CD8-positive, alpha-beta T cell (primary cell): ENCODE measurements at regions of chr18 and their contacts with region 1.

Region 1: DNA sequence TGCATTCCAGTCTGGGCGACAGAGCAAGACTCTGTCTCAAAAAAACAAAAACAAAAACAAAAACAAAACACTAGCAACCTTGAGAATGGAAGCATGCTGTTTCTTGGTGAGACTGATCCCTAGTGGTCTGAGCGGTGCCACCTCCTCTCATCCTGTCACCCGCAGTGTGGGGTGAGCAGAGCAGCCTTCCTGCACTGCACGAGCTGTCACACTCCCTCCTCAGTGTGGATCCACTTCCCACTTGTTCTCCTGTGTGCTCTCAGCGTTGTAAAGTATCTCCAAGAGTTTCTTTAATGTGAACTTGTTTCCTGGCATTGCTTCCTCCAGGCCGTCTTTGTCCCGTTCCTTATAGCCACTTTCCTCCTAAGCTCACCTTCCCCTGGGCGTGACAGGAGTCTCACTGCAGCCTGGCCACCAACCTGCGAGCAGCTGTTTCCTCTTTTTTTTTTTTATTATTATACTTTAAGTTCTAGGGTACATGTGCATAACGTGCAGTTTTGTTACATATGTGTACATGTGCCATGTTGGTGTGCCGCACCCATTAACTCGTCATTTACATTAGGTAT is 220.5 kb downstream of the FAM210A start:
- DNase-seq: peak in 1 of 9 experiments; percentile 28
- ATAC-seq: peak; percentile 62
- H3K4me3 ChIP-seq: no peak overlapping the region
- H3K4me3 Mint-ChIP-seq: peak overlapping the region; percentile 37
- H3K27ac ChIP-seq: no peak overlapping the region
- H3K27ac Mint-ChIP-seq: peak overlapping the region; percentile 64
- H3K4me1 ChIP-seq: peaks cover 18% of the 10 kb centered on the region
- H3K4me1 Mint-ChIP-seq: peaks cover 62% of the 10 kb centered on the region
- H3K27me3 ChIP-seq: no peaks in the 10 kb centered on the region
- H3K27me3 Mint-ChIP-seq: no peaks in the 10 kb centered on the region
- CTCF ChIP-seq: no peak

Region 2: GRCh38 chr18:12721495-12722275 is 784.2 kb before region 1 on chr18:
- CTCF ChIA-PET with region 1: no interaction called
- POLR2A ChIA-PET with region 1: no interaction called
- intact Hi-C with region 1: no loop called
- DNase-seq: no peak
- ATAC-seq: no peak
- H3K4me3 ChIP-seq: no peak overlapping the region
- H3K4me3 Mint-ChIP-seq: no peak overlapping the region
- H3K27ac ChIP-seq: no peak overlapping the region
- H3K27ac Mint-ChIP-seq: peak overlapping the region; percentile 35
- H3K4me1 ChIP-seq: no peaks in the 10 kb centered on the region
- H3K4me1 Mint-ChIP-seq: peaks cover 2% of the 10 kb centered on the region
- H3K27me3 ChIP-seq: no peaks in the 10 kb centered on the region
- H3K27me3 Mint-ChIP-seq: no peaks in the 10 kb centered on the region
- CTCF ChIP-seq: no peak

Region 3: DNA sequence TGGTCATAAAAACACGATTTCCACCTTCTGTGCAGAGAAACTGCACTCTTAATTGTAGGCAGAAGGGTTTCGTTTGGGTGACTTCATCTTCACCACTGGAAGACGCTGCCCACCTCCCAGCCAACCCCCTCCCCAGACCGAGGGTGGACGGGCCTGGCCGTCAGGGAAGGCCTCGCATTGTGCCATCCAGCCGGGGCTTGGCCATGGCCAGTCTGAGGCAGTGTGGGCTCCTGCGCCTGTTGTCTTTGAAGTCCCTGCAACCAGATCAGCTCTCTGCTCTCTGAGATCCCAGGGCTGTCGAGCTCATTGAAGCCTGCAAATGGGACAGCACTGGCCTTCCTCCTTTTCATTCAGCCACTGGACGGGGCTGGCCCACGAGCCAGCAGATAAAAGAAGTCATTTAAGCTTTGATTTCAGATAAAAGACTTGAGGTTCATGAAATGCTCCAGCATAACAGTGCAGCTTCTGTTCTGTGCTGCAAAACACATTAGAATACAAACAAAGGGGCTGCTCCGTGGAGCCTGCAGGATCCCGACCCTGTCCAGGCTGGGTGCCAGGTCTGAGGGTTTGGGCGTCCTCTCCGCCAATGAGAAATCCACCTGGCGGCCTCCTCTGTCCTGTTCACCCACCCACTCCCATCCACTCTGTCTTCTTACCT is 33.8 kb before region 1 on chr18:
- CTCF ChIA-PET with region 1: interaction called, 3 read pairs
- POLR2A ChIA-PET with region 1: no interaction called
- intact Hi-C with region 1: loop called in 1 of 2 experiments (anchors 5 kb)
- DNase-seq: no peak
- ATAC-seq: no peak
- H3K4me3 ChIP-seq: no peak overlapping the region
- H3K4me3 Mint-ChIP-seq: peak overlapping the region; percentile 11
- H3K27ac ChIP-seq: no peak overlapping the region
- H3K27ac Mint-ChIP-seq: peak overlapping the region; percentile 68
- H3K4me1 ChIP-seq: peaks cover 9% of the 10 kb centered on the region
- H3K4me1 Mint-ChIP-seq: peaks cover 58% of the 10 kb centered on the region
- H3K27me3 ChIP-seq: no peaks in the 10 kb centered on the region
- H3K27me3 Mint-ChIP-seq: no peaks in the 10 kb centered on the region
- CTCF ChIP-seq: no peak

Region 4: DNA sequence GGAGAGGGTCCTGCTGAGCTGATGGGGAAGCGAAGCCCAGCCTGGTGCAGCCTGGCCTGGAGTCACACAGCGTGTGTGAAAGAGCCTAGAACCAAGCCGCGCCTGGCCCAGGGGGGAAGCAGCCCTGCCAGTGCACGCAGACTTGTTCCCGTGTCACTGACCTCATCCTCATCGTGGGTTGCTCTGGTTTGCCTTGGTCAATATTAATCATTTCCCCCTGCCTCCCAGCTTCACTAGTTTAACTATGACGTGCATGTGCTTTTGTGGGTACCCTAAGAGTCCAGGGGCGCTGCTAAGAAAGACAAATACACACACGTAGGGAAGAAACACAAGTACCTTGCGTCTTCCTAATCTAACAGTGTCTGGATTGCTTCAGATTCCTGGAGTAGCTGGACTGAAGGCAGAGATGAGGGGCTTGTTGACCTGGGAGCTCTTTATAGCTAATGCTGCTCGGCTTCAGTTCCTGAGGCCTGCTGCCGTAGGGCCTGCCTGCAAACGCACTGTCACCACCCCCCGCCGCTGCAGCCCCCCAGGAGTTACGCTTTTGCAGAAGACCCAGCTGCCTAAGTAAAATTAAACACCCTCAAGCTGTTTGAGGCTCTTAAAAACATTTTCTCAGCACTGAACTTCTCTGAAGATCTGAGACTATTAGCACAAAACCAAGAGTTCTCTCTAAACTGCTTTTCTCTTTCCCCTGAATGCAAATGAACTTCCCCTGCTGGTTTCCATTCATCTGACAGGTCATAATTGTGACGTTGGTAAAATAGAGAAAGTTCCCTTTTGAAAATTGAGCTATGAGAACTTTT is 61.3 kb after region 1 on chr18:
- CTCF ChIA-PET with region 1: no interaction called
- POLR2A ChIA-PET with region 1: no interaction called
- intact Hi-C with region 1: no loop called
- DNase-seq: peak in 4 of 9 experiments; percentile 27 to 68 (median 36)
- ATAC-seq: peak; percentile 63
- H3K4me3 ChIP-seq: peak overlapping the region in 1 of 2 experiments; percentile 18
- H3K4me3 Mint-ChIP-seq: peak overlapping the region; percentile 74
- H3K27ac ChIP-seq: peak overlapping the region; percentile 22 to 39
- H3K27ac Mint-ChIP-seq: peak overlapping the region; percentile 90
- H3K4me1 ChIP-seq: peaks cover 36% of the 10 kb centered on the region
- H3K4me1 Mint-ChIP-seq: peaks cover 64% of the 10 kb centered on the region
- H3K27me3 ChIP-seq: no peaks in the 10 kb centered on the region
- H3K27me3 Mint-ChIP-seq: no peaks in the 10 kb centered on the region
- CTCF ChIP-seq: no peak